Activated CD4-positive, alpha-beta T cell treated with anti-CD3 and anti-CD28 coated beads for 36 hours (primary cell): ENCODE measurements at regions of chr2 and their contacts with region 1.

Region 1: DNA sequence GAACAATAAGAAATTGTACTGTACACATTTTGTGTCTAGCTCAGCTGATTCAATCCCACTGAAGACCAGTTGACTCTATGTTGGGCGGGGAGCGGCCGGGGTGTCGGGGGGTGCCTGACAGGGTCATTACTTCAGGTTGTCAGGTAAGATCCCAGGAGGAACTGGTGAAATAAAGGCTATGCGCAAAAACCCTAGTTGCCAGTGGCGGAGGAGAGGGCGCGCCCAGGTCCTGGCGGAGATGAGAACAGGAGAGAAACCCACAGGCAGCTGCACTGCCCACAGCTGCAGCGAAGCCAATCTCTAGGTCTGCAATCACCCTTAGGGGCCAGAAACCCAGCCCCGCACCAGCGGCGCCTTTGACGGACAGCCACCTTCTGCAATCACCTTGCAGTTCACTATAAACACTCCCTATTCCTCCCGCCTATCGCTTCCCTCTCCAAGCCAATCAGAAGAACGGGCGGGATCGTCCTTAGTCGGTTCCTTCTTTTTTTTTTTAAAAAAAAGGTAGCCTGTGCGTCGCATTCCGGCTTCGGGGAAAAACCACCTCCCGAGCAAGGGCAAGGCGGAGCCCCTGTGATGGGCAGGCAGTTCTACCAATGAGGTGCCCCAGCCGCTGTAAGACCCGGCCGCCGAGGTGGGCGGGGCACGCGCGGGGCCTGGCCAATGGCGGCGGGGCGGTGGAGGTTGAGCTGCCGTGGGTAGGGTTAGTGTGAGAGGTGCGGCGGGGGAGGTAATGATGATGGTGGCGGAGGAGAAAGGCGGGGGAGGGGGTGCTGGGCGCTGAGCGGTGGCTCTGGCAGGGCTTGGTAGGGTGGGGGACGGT is at the start of gene EHBP1:
- DNase-seq: peak; percentile 99
- ATAC-seq: peak; percentile 95
- H3K4me3 Mint-ChIP-seq: peak within 1 kb of the TSS; percentile 79
- H3K27ac Mint-ChIP-seq: peak within 1 kb of the TSS; percentile 83
- H3K4me1 Mint-ChIP-seq: peaks cover 31% of the 10 kb centered on the region
- H3K27me3 Mint-ChIP-seq: no peaks in the 10 kb centered on the region
- total RNA-seq, gene EHBP1: 27.3 to 28.5 TPM

Region 2: DNA sequence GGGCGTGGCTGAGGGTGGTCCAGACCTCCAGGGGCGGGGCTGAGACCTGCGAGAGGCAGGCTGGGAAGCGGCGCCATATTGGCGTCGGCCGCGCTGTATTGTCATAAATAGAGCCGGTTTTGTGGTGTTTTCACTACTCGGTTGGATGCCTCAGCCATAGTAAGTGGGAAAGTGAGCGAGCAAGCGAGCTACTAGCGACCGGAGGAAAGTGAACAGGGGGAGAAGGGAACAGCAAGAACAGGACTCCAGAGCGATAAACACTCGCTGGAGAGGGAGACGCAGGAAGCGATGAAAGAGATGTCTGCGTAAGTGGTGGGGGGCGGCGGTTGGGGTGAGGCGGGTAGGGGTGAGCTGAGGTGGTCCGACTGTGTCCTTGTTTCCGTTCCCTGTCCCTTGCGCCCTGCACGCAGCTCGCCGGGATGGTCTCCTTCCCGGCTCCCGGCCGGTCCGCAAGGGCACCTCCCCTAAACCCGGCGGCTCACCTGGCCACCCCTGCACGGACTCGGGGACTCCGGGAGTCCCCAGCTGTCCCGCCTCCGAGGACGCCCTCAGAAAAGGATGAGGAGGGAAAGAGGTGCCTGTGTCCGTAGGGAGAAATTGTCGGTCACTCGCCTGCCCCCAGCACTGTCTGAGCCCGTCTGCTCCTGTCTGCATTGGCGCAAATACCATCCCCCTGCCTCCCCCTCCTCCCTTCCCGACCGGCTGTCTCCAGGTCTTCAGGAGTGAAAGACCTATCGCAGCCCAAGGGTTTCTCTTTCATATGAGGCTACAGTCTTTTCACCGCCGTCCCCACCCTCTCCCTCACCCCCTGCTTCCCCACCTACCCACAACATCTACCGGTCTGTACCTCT is 1948.8 kb before region 1 on chr2 and contains the start of gene PAPOLG:
- CTCF ChIA-PET with region 1: no interaction called
- POLR2A ChIA-PET with region 1: no interaction called
- intact Hi-C with region 1: loop called in 1 of 2 experiments (anchors 2 kb)
- DNase-seq: peak; percentile 99
- ATAC-seq: peak; percentile 98
- H3K4me3 Mint-ChIP-seq: peak within 1 kb of the TSS; percentile 99
- H3K27ac Mint-ChIP-seq: peak within 1 kb of the TSS; percentile 100
- H3K4me1 Mint-ChIP-seq: peaks cover 34% of the 10 kb centered on the region
- H3K27me3 Mint-ChIP-seq: no peaks in the 10 kb centered on the region
- total RNA-seq, gene PAPOLG: 13.8 to 14.2 TPM

Region 3: DNA sequence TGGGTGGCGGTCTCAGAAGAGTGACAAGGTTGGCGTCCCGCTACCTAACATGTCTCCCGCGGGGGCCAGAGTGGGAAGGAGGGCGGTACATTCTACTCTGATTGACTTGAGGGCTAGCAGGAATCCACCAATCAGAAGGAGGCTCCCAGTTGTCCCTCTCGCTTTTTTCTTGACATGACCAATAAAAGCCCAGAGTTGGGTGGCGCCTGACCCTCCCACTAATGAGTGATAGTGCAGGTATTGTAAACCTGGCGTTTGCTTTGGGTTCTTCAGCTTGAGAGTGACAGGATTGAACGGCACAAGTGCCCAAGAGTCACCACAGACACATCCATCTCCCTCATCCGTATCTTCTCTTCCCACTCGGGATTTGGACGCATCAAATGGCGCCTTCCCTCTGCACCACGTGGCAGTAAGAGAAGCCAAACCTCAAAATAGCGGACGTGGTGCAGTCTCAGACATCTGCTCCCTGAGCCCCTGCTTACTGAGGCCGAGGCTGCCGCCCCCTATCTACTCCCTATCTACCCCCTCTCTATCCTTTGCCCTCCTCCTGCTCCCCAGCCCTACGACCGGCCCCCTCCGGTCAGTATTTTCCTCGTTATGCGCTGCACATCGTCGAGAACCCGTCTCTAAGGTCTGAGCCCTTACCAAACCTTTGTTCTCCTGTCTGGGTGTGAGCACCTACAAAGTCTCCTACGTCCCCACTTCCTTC is 850.6 kb before region 1 on chr2:
- CTCF ChIA-PET with region 1: no interaction called
- POLR2A ChIA-PET with region 1: no interaction called
- intact Hi-C with region 1: loop called in 1 of 2 experiments (anchors 2 kb)
- DNase-seq: peak; percentile 93
- ATAC-seq: peak; percentile 94
- H3K4me3 Mint-ChIP-seq: peak overlapping the region; percentile 99
- H3K27ac Mint-ChIP-seq: peak overlapping the region; percentile 94
- H3K4me1 Mint-ChIP-seq: peaks cover 20% of the 10 kb centered on the region
- H3K27me3 Mint-ChIP-seq: no peaks in the 10 kb centered on the region

Region 4: GRCh38 chr2:61888267-61889055 is 816.8 kb before region 1 on chr2 and contains the start of gene CCT4:
- CTCF ChIA-PET with region 1: no interaction called
- POLR2A ChIA-PET with region 1: no interaction called
- intact Hi-C with region 1: loop called (anchors 1 to 2 kb)
- DNase-seq: peak; percentile 93
- ATAC-seq: peak; percentile 79
- H3K4me3 Mint-ChIP-seq: peak within 1 kb of the TSS; percentile 99
- H3K27ac Mint-ChIP-seq: peak within 1 kb of the TSS; percentile 99
- H3K4me1 Mint-ChIP-seq: peaks cover 31% of the 10 kb centered on the region
- H3K27me3 Mint-ChIP-seq: no peaks in the 10 kb centered on the region
- total RNA-seq, gene CCT4: 255 to 373 TPM

Region 5: DNA sequence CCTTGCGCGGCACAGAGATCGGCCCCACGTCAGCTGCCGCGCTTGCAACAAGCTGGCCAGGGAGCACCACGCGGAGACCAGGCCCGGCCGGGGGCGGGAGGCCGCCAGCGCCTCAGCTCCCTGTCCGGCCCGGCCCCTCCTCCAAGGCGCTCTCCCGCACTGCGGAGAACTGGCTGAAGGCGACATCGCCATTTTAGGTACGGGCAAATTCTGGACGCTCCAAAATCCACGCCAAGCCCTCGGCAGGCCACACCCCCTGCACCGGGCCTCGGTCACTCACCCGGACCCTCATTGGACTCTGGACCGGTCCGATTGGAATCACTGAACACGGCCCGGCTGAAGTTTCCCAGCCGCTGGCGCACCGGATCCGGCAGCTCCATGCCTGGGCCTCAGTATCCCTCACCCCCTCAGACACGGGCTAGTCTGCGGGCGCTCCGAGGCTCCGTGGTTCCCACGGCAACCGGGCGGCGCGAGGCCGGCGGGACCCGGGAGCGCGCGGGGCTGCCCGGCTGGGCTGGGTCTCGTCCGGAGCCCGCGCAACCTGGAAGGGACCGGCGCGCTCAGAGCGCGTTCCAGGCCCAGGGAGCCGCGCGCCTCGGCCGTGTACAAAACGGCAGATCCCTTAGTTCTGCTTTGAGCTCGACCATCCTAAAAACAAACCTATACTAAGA is 199.3 kb before region 1 on chr2 and contains the start of gene TMEM17:
- CTCF ChIA-PET with region 1: interaction called, 3 read pairs
- POLR2A ChIA-PET with region 1: no interaction called
- intact Hi-C with region 1: loop called in 1 of 2 experiments (anchors 2 kb)
- DNase-seq: peak; percentile 62
- ATAC-seq: peak; percentile 82
- H3K4me3 Mint-ChIP-seq: peak within 1 kb of the TSS; percentile 70
- H3K27ac Mint-ChIP-seq: peak within 1 kb of the TSS; percentile 1
- H3K4me1 Mint-ChIP-seq: peaks cover 8% of the 10 kb centered on the region
- H3K27me3 Mint-ChIP-seq: peaks cover 19% of the 10 kb centered on the region
- total RNA-seq, gene TMEM17: 0.18 to 0.25 TPM

Region 6: GRCh38 chr2:62774555-62775366 is 69.5 kb after region 1 on chr2:
- CTCF ChIA-PET with region 1: interaction called, 5 read pairs
- POLR2A ChIA-PET with region 1: no interaction called
- intact Hi-C with region 1: loop called in 1 of 2 experiments (anchors 2 kb)
- DNase-seq: no peak
- ATAC-seq: no peak
- H3K4me3 Mint-ChIP-seq: no peak overlapping the region
- H3K27ac Mint-ChIP-seq: no peak overlapping the region
- H3K4me1 Mint-ChIP-seq: no peaks in the 10 kb centered on the region
- H3K27me3 Mint-ChIP-seq: no peaks in the 10 kb centered on the region

Region 7: GRCh38 chr2:63050334-63051041 is 345.3 kb after region 1 on chr2 and contains the start of gene OTX1:
- CTCF ChIA-PET with region 1: no interaction called
- POLR2A ChIA-PET with region 1: no interaction called
- intact Hi-C with region 1: loop called in 1 of 2 experiments (anchors 2 kb)
- DNase-seq: peak; percentile 80
- ATAC-seq: peak; percentile 80
- H3K4me3 Mint-ChIP-seq: peak within 1 kb of the TSS; percentile 75
- H3K27ac Mint-ChIP-seq: peak within 1 kb of the TSS; percentile 47
- H3K4me1 Mint-ChIP-seq: peaks cover 60% of the 10 kb centered on the region
- H3K27me3 Mint-ChIP-seq: peaks cover 78% of the 10 kb centered on the region
- total RNA-seq, gene OTX1: not detected